ENCODE measurements at regions of chrX and their contacts with region 1.

Region 1: GRCh38 chrX:104113222-104113965 is 1.1 kb downstream of the ZCCHC18 start:
- DNase-seq: peak in 1 of 2 donors; percentile 78
- ATAC-seq: peak; percentile 32 to 62 (median 46)
- H3K4me3 ChIP-seq: peak overlapping the region; percentile 81
- H3K4me3 Mint-ChIP-seq: peak overlapping the region; percentile 93
- H3K27ac ChIP-seq: peak overlapping the region; percentile 88
- H3K27ac Mint-ChIP-seq: peak overlapping the region; percentile 86 to 94
- H3K4me1 ChIP-seq: peaks cover 44% of the 10 kb centered on the region
- H3K4me1 Mint-ChIP-seq: peaks cover 20 to 66% of the 10 kb centered on the region in 2 donors
- H3K27me3 ChIP-seq: no peaks in the 10 kb centered on the region
- H3K27me3 Mint-ChIP-seq: no peaks in the 10 kb centered on the region
- CTCF ChIP-seq: peak; percentile 20

Region 2: GRCh38 chrX:104098151-104098808 is 15.1 kb before region 1 on chrX:
- intact Hi-C with region 1: loop called (anchors 1 kb)
- DNase-seq: peak in 1 of 2 donors; percentile 87
- ATAC-seq: peak; percentile 67 to 88 (median 87)
- H3K4me3 ChIP-seq: no peak overlapping the region
- H3K4me3 Mint-ChIP-seq: no peak overlapping the region
- H3K27ac ChIP-seq: no peak overlapping the region
- H3K27ac Mint-ChIP-seq: peak overlapping the region in 1 of 2 donors; percentile 76
- H3K4me1 ChIP-seq: no peaks in the 10 kb centered on the region
- H3K4me1 Mint-ChIP-seq: peaks cover 0 to 4% of the 10 kb centered on the region in 2 donors
- H3K27me3 ChIP-seq: no peaks in the 10 kb centered on the region
- H3K27me3 Mint-ChIP-seq: peaks cover 0 to 15% of the 10 kb centered on the region in 2 donors
- CTCF ChIP-seq: peak; percentile 42

Region 3: DNA sequence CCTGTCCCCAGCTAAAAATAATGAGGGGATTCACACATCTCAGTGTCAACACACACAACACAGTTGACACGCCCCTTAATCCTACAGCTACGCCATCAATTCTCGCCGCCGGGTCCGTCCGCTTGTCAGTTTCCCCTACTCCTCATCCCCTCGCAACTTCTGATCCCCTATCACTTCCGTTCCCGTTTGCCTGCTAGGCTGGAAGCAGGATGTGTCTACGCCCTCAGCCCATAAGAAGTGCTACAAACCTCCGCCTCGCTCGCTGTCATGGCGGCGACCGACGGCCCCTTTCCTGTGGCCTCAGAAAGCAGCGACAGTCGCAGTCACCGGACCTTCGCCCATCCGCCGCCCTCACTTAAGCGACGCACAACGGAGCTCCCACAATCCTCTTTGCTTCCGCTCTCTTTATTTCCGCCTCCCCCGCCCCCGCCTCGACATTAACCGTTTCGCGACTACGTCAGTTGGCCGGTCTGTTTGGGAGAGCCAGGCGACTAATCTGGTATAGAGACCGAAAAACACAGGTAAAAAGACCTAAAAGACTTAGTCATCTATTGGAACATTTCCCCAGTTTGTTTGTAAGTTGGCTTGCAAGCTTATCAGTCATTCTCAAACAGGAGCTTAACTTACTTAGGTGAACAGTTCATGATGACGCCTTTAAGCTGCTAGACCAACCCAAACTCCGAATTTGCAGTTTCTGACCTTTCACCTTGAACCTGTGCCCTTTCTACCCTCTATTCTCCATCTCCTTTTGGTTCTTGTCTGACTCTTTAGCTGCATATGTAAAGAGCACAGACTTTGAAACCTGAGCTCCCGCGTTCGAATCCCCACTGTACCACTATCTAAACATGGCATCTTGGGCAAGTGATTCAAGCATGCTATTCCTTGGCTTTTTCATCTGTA is 43.5 kb after region 1 on chrX and contains the start of gene SLC25A53:
- intact Hi-C with region 1: loop called (anchors 5 kb)
- DNase-seq: peak; percentile 67 to 88
- ATAC-seq: peak; percentile 85 to 93 (median 88)
- H3K4me3 ChIP-seq: peak within 1 kb of the TSS; percentile 86
- H3K4me3 Mint-ChIP-seq: peak within 1 kb of the TSS; percentile 99
- H3K27ac ChIP-seq: peak within 1 kb of the TSS; percentile 99
- H3K27ac Mint-ChIP-seq: peak within 1 kb of the TSS; percentile 98 to 99
- H3K4me1 ChIP-seq: peaks cover 9% of the 10 kb centered on the region
- H3K4me1 Mint-ChIP-seq: peaks cover 20 to 23% of the 10 kb centered on the region in 2 donors
- H3K27me3 ChIP-seq: no peaks in the 10 kb centered on the region
- H3K27me3 Mint-ChIP-seq: peaks cover 0 to 6% of the 10 kb centered on the region in 2 donors
- CTCF ChIP-seq: no peak
- total RNA-seq, gene SLC25A53: 10.1 to 20.6 (median 12.8) TPM